ENCODE measurements at regions of chr20 and their contacts with region 1.

Region 1: DNA sequence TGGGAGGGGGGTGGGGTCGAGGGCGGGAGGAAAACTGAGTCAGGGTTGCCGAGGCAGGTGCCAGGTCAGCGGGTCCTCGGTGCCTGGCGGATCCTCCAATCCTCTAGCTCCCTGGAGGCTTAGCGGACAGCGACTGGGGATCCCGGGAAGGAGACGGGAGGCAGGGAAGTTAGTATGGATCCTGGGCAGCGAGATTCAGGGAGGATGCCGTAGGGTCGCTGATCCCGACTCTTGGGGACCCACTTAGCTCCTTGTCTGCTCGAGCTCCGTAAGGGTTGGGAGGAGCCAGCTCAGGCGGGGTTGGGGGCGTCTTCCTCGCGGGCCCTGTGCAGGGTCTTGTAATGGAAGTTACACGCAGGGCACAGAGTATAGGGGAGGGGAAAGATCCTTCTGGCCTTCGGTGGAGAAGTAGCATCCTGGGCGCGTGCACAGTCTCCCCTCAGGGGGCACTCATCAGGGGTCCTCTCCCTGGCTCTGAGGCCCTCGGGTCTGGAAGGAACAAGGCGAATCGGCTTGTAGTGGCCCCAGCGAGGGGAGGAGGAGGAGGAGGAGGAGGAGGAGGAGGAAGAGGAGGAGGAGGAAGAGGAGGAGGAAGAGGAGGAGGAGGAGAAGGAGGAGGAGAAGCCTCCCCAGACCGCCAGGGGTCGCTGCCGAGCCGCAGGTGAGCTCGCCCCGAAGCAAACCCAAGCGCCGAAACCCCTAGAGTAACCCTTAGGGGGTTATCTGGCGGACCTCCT is 6.4 kb upstream of the SLC12A5 start:
- DNase-seq: peak; percentile 51 to 56
- ATAC-seq: peak; percentile 62 to 79
- H3K4me3 ChIP-seq: peak overlapping the region; percentile 60
- H3K27ac ChIP-seq: peak overlapping the region in 1 of 2 experiments; percentile 88; a peak in 3 of 6 replicates
- H3K4me1 ChIP-seq: no peaks in the 10 kb centered on the region
- CTCF ChIP-seq: peak; percentile 85
- EP300 ChIP-seq: no peak
- POLR2A ChIP-seq: no peak
- RAD21 ChIP-seq: peak; percentile 77 to 84

Region 2: GRCh38 chr20:45998761-45999160 is 23.8 kb before region 1 on chr20:
- CTCF ChIA-PET with region 1: interaction called, 11 read pairs
- POLR2A ChIA-PET with region 1: no interaction called
- DNase-seq: no peak
- ATAC-seq: no peak
- H3K4me3 ChIP-seq: no peak overlapping the region
- H3K27ac ChIP-seq: no peak overlapping the region
- H3K4me1 ChIP-seq: peaks cover 18% of the 10 kb centered on the region
- CTCF ChIP-seq: no peak
- EP300 ChIP-seq: no peak
- POLR2A ChIP-seq: no peak
- RAD21 ChIP-seq: no peak

Region 3: GRCh38 chr20:46040902-46041535 is 18.4 kb after region 1 on chr20:
- CTCF ChIA-PET with region 1: interaction called, 19 read pairs
- POLR2A ChIA-PET with region 1: no interaction called
- DNase-seq: peak; percentile 24 to 25
- ATAC-seq: peak; percentile 61 to 78; a peak in 3 of 6 replicates
- H3K4me3 ChIP-seq: no peak overlapping the region
- H3K27ac ChIP-seq: no peak overlapping the region
- H3K4me1 ChIP-seq: no peaks in the 10 kb centered on the region
- CTCF ChIP-seq: no peak
- EP300 ChIP-seq: no peak
- POLR2A ChIP-seq: no peak
- RAD21 ChIP-seq: no peak

Region 4: GRCh38 chr20:46060301-46060881 is 37.8 kb after region 1 on chr20:
- CTCF ChIA-PET with region 1: interaction called, 11 read pairs
- POLR2A ChIA-PET with region 1: no interaction called
- DNase-seq: no peak
- ATAC-seq: no peak
- H3K4me3 ChIP-seq: no peak overlapping the region
- H3K27ac ChIP-seq: no peak overlapping the region
- H3K4me1 ChIP-seq: no peaks in the 10 kb centered on the region
- CTCF ChIP-seq: no peak
- EP300 ChIP-seq: no peak
- POLR2A ChIP-seq: no peak
- RAD21 ChIP-seq: no peak

Region 5: GRCh38 chr20:46174469-46175128 is 152.0 kb after region 1 on chr20:
- CTCF ChIA-PET with region 1: interaction called, 26 read pairs
- POLR2A ChIA-PET with region 1: no interaction called
- DNase-seq: peak; percentile 75 to 87
- ATAC-seq: peak; percentile 84 to 96
- H3K4me3 ChIP-seq: peak overlapping the region; percentile 31; the same call in 1 of the 3 replicates
- H3K27ac ChIP-seq: peak overlapping the region in 1 of 2 experiments; percentile 56; a peak in 1 of 6 replicates
- H3K4me1 ChIP-seq: no peaks in the 10 kb centered on the region
- CTCF ChIP-seq: peak; percentile 68
- EP300 ChIP-seq: no peak
- POLR2A ChIP-seq: no peak
- RAD21 ChIP-seq: peak; percentile 52 to 62